Endothelial cell of umbilical vein (primary cell): ENCODE measurements at regions of chr19 and their contacts with region 1.

Region 1: GRCh38 chr19:18408053-18408476 is 10.6 kb upstream of the LRRC25 start:
- DNase-seq: no peak
- H3K4me3 ChIP-seq: no peak overlapping the region
- H3K27ac ChIP-seq: no peak overlapping the region
- H3K4me1 ChIP-seq: no peaks in the 10 kb centered on the region
- H3K27me3 ChIP-seq: no peaks in the 10 kb centered on the region
- CTCF ChIP-seq: peak; percentile 55 to 69
- POLR2A ChIP-seq: no peak

Region 2: DNA sequence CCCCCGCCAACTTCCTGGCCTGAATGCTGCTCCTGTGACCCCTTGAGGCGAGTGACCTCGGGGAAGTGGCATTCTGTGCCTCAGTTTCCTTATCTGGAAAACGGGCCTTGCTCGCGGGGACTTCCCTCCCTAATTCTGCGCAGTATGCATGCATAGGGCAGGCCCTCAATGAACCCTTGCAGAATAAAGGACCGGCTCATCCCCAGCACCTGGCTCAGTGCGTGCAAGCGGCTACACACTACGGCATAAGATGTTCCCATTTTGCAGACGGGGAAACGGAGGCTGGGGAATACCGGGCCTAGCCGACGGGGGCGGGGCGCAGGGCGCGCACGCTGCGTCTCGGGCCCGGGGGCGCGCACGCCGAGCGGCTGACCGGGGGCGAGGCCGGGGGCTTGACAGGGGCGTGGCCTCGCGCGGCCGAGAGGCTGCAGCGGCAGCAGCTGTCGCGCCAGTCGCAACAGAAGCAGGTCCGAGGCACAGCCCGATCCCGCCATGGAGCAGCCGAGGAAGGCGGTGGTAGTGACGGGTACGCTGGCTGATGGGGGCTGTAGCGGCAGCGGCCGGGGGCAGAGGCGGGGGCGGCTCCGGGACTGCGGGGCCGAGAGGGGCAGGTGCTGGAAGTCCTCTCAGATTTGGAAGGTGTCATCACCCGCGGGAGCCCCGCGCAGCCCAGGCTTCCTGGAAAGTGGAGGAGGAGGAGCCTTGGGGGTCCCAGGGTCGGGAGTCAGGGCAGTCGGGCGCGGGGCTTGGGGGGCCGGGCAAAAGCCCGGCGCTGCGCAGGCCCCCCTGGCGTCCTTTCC is 67.7 kb before region 1 on chr19 and contains the start of gene PGPEP1:
- CTCF ChIA-PET with region 1: interaction called, 28 read pairs
- POLR2A ChIA-PET with region 1: no interaction called
- dilution Hi-C with region 1: no loop called
- intact Hi-C with region 1: no loop called
- DNase-seq: peak; percentile 65
- H3K4me3 ChIP-seq: peak within 1 kb of the TSS; percentile 17 to 91 (median 52)
- H3K27ac ChIP-seq: no peak within 1 kb of the TSS
- H3K4me1 ChIP-seq: peaks cover 11% of the 10 kb centered on the region
- H3K27me3 ChIP-seq: peaks cover 0 to 2% of the 10 kb centered on the region in 2 experiments
- CTCF ChIP-seq: no peak
- POLR2A ChIP-seq: peak; percentile 64
- total RNA-seq, gene PGPEP1: 27.2 and 30.5 TPM in 2 replicates